ENCODE measurements at regions of chr6 and their contacts with region 1.

Region 1: GRCh38 chr6:153092082-153093013 is 38.7 kb downstream of the RGS17 start:
- DNase-seq: peak; percentile 55
- ATAC-seq: peak; percentile 54
- H3K4me3 ChIP-seq: peak overlapping the region; percentile 15; the same call in 1 of the 2 replicates
- H3K27ac ChIP-seq: peak overlapping the region; percentile 72
- H3K4me1 ChIP-seq: peaks cover 50% of the 10 kb centered on the region
- H3K27me3 ChIP-seq: no peaks in the 10 kb centered on the region
- CTCF ChIP-seq: no peak

Region 2: DNA sequence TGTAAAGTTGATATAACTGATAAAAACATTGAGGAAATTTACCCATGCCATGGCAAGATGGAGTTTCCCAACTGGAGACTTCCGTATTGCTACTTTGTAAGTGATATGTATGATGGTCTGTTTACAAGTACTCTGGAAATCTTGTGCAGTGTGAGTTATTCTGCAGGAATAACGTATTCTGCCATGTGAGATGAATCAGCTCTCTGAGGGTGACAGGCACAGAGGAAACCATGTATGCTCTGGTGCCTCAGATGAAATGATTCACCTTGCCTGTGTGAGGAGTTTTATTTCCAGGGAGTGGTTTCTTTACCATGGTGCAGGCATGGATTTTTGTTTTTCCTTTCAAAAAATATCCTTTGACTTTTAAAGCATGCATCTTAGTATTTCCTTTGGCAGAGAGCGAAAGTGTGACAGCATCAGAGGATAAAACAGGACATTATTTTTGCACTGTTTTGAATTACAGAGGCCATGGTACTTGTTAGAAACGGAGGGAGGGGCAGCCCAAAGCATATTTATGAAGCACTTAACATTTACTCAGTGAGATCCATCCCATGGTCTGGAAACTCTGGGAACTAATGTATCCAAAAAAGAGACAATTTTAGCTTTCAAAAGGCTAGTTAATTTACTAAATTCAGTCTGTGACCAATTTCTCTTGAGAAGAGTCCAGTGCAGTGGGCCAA is 53.8 kb before region 1 on chr6:
- CTCF ChIA-PET with region 1: no interaction called
- POLR2A ChIA-PET with region 1: no interaction called
- intact Hi-C with region 1: loop called (anchors 2 kb)
- DNase-seq: peak; percentile 74
- ATAC-seq: peak; percentile 99
- H3K4me3 ChIP-seq: no peak overlapping the region
- H3K27ac ChIP-seq: peak overlapping the region; percentile 70
- H3K4me1 ChIP-seq: peaks cover 15% of the 10 kb centered on the region
- H3K27me3 ChIP-seq: no peaks in the 10 kb centered on the region
- CTCF ChIP-seq: no peak

Region 3: GRCh38 chr6:153059761-153060160 is 32.6 kb before region 1 on chr6:
- CTCF ChIA-PET with region 1: no interaction called
- POLR2A ChIA-PET with region 1: no interaction called
- intact Hi-C with region 1: loop called (anchors 2 kb)
- DNase-seq: no peak
- ATAC-seq: no peak
- H3K4me3 ChIP-seq: no peak overlapping the region
- H3K27ac ChIP-seq: peak overlapping the region; percentile 67; the same call in 1 of the 2 replicates
- H3K4me1 ChIP-seq: peaks cover 31% of the 10 kb centered on the region
- H3K27me3 ChIP-seq: no peaks in the 10 kb centered on the region
- CTCF ChIP-seq: peak; percentile 38; the same call in 1 of the 2 replicates

Region 4: DNA sequence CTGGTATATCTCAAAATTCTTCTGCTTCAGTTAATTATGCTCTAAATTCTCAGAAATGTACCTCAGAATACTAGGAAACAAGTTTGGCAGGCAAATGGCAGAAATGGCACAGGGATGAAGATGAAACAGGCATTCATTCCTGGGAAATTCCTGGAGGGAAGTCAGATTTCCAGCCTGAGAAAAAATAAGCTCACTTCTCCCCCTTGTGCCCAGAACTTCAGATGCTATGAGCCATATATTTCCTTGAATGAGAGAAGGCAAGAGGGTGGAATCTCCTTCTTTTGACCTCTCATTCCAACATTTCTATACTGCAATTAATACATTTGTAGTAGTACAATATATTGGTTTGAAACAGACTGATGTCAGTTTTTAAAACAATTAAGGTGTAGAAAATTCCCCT is 16.0 kb after region 1 on chr6:
- CTCF ChIA-PET with region 1: no interaction called
- POLR2A ChIA-PET with region 1: no interaction called
- intact Hi-C with region 1: loop called (anchors 2 kb)
- DNase-seq: peak; percentile 50
- ATAC-seq: peak; percentile 45; the same call in 1 of the 2 replicates
- H3K4me3 ChIP-seq: no peak overlapping the region
- H3K27ac ChIP-seq: no peak overlapping the region
- H3K4me1 ChIP-seq: no peaks in the 10 kb centered on the region
- H3K27me3 ChIP-seq: no peaks in the 10 kb centered on the region
- CTCF ChIP-seq: peak; percentile 64

Region 5: DNA sequence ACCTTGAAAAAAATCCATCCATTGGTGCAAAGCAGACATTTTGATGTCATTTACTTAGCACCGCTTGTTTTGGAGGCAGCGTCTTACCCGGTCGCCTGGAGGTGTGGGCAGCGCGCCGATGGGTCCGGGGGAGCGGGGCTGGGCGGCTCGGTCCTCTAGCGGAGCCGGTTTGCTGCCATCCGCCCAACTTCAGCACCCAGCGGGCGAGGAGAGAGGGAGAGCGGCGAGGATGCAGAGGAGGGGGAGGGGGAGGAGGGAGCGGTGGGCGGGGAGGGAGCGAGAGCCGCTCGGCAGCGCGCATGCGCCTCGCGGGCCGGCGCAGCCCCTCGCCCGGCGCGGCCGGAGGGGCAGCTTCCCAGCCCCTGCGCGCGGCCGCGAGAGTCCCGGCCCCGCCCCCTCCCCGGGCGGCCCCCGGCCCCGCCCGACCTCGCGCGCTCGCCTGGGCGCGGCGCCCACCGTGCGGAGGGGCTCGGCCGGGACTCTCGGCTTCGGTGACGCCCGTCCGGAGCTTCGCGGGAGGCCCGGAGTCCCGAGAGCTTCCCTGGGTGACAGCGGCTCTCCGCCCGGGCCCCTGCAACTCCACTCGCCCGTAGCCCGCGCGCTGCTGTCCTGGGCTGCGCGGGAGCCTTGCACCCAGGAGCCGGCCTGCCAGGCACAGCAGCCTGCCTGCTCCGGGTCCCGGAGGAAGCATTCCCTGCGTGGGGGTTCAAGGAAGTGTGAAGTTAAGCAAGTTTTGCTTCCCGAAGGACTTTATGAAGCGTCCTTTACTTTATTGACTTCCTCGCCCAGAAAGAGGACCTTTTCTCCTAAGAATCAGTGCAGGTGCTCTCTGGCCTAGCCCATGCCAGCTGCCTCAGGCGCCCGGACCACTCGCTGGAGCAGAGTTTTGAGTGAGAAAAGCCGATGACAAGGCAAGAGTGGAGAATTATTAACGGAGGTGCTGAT is 39.0 kb after region 1 on chr6 and contains the start of gene RGS17:
- CTCF ChIA-PET with region 1: no interaction called
- POLR2A ChIA-PET with region 1: no interaction called
- intact Hi-C with region 1: loop called (anchors 5 kb)
- DNase-seq: peak; percentile 49
- ATAC-seq: peak; percentile 72
- H3K4me3 ChIP-seq: peak within 1 kb of the TSS; percentile 84
- H3K27ac ChIP-seq: no peak within 1 kb of the TSS
- H3K4me1 ChIP-seq: peaks cover 10% of the 10 kb centered on the region
- H3K27me3 ChIP-seq: no peaks in the 10 kb centered on the region
- CTCF ChIP-seq: no peak
- total RNA-seq, gene RGS17: 0.40 and 1.4 TPM in 2 replicates

Region 6: GRCh38 chr6:153167061-153167891 is 74.9 kb after region 1 on chr6:
- CTCF ChIA-PET with region 1: no interaction called
- POLR2A ChIA-PET with region 1: no interaction called
- intact Hi-C with region 1: loop called (anchors 2 kb)
- DNase-seq: peak; percentile 83
- ATAC-seq: peak; percentile 82
- H3K4me3 ChIP-seq: peak overlapping the region; percentile 41; the same call in 1 of the 2 replicates
- H3K27ac ChIP-seq: peak overlapping the region; percentile 93
- H3K4me1 ChIP-seq: peaks cover 33% of the 10 kb centered on the region
- H3K27me3 ChIP-seq: no peaks in the 10 kb centered on the region
- CTCF ChIP-seq: no peak